Activated CD4-positive, alpha-beta memory T cell treated with anti-CD3 and anti-CD28 coated beads, Interleukin-2, amount 10 ng/mL, durations not matched to agents 7 days and 5 days (primary cell): ENCODE measurements at regions of chr1 and their contacts with region 1.

Region 1: DNA sequence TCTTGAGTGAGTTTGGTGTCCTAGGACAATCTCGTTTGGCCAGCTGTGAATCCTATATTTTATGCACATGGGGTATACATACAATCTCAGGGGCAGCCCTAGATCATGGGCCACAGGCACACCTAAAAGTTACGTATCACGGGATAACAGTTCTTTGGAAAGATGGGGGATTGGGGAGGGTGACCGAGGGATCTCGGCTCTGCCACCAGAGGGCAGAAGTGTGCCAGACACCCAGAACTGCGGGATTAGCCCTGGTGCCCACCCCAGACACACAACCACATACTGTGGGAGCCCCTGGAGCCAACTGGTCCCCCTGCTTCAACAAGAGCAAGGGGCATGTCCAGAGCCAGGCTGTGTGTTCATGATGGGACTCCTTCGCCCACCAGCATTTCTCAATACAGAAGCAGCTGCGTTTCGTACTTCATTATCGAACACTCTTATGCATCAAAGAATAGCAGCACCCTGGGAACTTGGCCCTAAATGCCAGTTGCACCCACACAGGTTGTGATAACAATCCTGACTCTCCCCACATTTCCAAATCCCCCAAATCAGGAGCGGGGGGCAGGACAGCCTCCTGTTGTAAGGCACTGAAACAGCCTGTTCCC is 37.4 kb downstream of the TMCO4 start:
- DNase-seq: peak; percentile 26
- H3K4me3 Mint-ChIP-seq: no peak overlapping the region
- H3K27ac Mint-ChIP-seq: no peak overlapping the region
- H3K4me1 Mint-ChIP-seq: peaks cover 18% of the 10 kb centered on the region
- H3K27me3 Mint-ChIP-seq: no peaks in the 10 kb centered on the region

Region 2: GRCh38 chr1:19735440-19736127 is 26.7 kb before region 1 on chr1:
- CTCF ChIA-PET with region 1: no interaction called
- POLR2A ChIA-PET with region 1: no interaction called
- DNase-seq: no peak
- H3K4me3 Mint-ChIP-seq: no peak overlapping the region
- H3K27ac Mint-ChIP-seq: no peak overlapping the region
- H3K4me1 Mint-ChIP-seq: no peaks in the 10 kb centered on the region
- H3K27me3 Mint-ChIP-seq: no peaks in the 10 kb centered on the region

Region 3: GRCh38 chr1:19750101-19750881 is 12.0 kb before region 1 on chr1:
- CTCF ChIA-PET with region 1: interaction called, 11 read pairs
- POLR2A ChIA-PET with region 1: no interaction called
- DNase-seq: no peak
- H3K4me3 Mint-ChIP-seq: no peak overlapping the region
- H3K27ac Mint-ChIP-seq: no peak overlapping the region
- H3K4me1 Mint-ChIP-seq: no peaks in the 10 kb centered on the region
- H3K27me3 Mint-ChIP-seq: no peaks in the 10 kb centered on the region

Region 4: GRCh38 chr1:19811206-19811851 is 49.1 kb after region 1 on chr1:
- CTCF ChIA-PET with region 1: interaction called, 11 read pairs
- POLR2A ChIA-PET with region 1: no interaction called
- DNase-seq: peak; percentile 59
- H3K4me3 Mint-ChIP-seq: no peak overlapping the region
- H3K27ac Mint-ChIP-seq: no peak overlapping the region
- H3K4me1 Mint-ChIP-seq: no peaks in the 10 kb centered on the region
- H3K27me3 Mint-ChIP-seq: peaks cover 3% of the 10 kb centered on the region